Activated T-helper 1 cell treated with anti-CD3 and anti-CD28 coated beads, Interleukin-12 subunit alpha, Interleukin-12 subunit beta, Interleukin-2, Interleukin-4 antibody, amounts not matched to agents 30 ng/mL and 10 ng/mL and 1 ng/mL, durations not matched to agents 14 hours and 24 hours and 36 hours (primary cell): ENCODE measurements at regions of chr2 and their contacts with region 1.

Region 1: GRCh38 chr2:143468341-143468888 is 339.2 kb downstream of the ARHGAP15 start:
- DNase-seq: no peak
- H3K4me3 Mint-ChIP-seq: peak overlapping the region; percentile 11
- H3K27ac Mint-ChIP-seq: peak overlapping the region; percentile 81
- H3K4me1 Mint-ChIP-seq: peaks cover 48% of the 10 kb centered on the region
- H3K27me3 Mint-ChIP-seq: no peaks in the 10 kb centered on the region

Region 2: DNA sequence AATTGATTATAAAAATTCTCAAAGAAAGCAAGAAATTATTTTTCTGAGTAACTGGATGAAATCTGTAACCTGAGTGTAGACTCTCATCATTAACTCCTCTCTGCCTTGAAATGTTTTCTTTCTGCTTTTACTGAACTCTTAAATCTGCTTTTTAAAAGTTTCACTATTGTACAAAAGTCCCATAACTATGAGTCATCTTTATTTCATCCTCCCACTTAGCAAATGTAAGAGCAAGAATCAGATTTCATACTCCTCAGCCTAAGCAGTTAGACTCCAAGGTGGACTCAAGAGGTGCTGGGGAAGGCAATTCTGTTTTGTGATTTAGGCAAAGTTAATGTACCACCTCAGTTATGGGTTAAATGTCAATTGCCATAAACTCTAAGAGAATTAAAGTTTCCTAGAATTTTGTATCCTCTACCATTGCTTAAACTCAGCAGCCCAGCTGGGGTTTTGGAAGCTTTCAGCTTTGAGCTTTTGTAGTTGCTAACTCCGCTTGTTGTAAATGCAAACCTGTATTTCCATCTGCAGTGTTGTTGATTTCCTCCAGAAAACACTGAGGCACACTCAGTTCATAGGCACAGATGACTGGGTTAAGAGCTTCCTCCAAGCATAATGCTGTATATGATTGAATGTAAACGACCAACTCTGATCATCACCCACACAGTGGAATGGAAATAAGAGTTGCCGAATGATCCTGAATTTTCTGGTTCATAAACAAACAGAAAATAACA is 70.4 kb before region 1 on chr2:
- intact Hi-C with region 1: loop called (anchors 1 kb)
- DNase-seq: no peak
- H3K4me3 Mint-ChIP-seq: no peak overlapping the region
- H3K27ac Mint-ChIP-seq: peak overlapping the region; percentile 67
- H3K4me1 Mint-ChIP-seq: peaks cover 23% of the 10 kb centered on the region
- H3K27me3 Mint-ChIP-seq: no peaks in the 10 kb centered on the region

Region 3: GRCh38 chr2:143451642-143452281 is 16.7 kb before region 1 on chr2:
- intact Hi-C with region 1: loop called (anchors 1 kb)
- DNase-seq: no peak
- H3K4me3 Mint-ChIP-seq: no peak overlapping the region
- H3K27ac Mint-ChIP-seq: no peak overlapping the region
- H3K4me1 Mint-ChIP-seq: peaks cover 42% of the 10 kb centered on the region
- H3K27me3 Mint-ChIP-seq: no peaks in the 10 kb centered on the region

Region 4: GRCh38 chr2:143696651-143697050 is 228.2 kb after region 1 on chr2:
- intact Hi-C with region 1: loop called (anchors 1 kb)
- DNase-seq: no peak
- H3K4me3 Mint-ChIP-seq: no peak overlapping the region
- H3K27ac Mint-ChIP-seq: no peak overlapping the region
- H3K4me1 Mint-ChIP-seq: peaks cover 27% of the 10 kb centered on the region
- H3K27me3 Mint-ChIP-seq: no peaks in the 10 kb centered on the region

Region 5: GRCh38 chr2:144032566-144032965 is 564.2 kb after region 1 on chr2:
- intact Hi-C with region 1: no loop called
- DNase-seq: no peak
- H3K4me3 Mint-ChIP-seq: no peak overlapping the region
- H3K27ac Mint-ChIP-seq: no peak overlapping the region
- H3K4me1 Mint-ChIP-seq: no peaks in the 10 kb centered on the region
- H3K27me3 Mint-ChIP-seq: peaks cover 1% of the 10 kb centered on the region

Region 6: GRCh38 chr2:144307711-144308110 is 839.3 kb after region 1 on chr2:
- intact Hi-C with region 1: loop called (anchors 5 kb)
- DNase-seq: no peak
- H3K4me3 Mint-ChIP-seq: no peak overlapping the region
- H3K27ac Mint-ChIP-seq: no peak overlapping the region
- H3K4me1 Mint-ChIP-seq: peaks cover 37% of the 10 kb centered on the region
- H3K27me3 Mint-ChIP-seq: no peaks in the 10 kb centered on the region